ENCODE measurements at regions of chr3 and their contacts with region 1.

Region 1: GRCh38 chr3:12224181-12225147 is 64.4 kb upstream of the PPARG start:
- DNase-seq: peak; percentile 61
- H3K4me3 Mint-ChIP-seq: no peak overlapping the region
- H3K27ac Mint-ChIP-seq: peak overlapping the region; percentile 47
- H3K4me1 Mint-ChIP-seq: peaks cover 60% of the 10 kb centered on the region
- H3K27me3 Mint-ChIP-seq: no peaks in the 10 kb centered on the region
- CTCF ChIP-seq: no peak

Region 2: DNA sequence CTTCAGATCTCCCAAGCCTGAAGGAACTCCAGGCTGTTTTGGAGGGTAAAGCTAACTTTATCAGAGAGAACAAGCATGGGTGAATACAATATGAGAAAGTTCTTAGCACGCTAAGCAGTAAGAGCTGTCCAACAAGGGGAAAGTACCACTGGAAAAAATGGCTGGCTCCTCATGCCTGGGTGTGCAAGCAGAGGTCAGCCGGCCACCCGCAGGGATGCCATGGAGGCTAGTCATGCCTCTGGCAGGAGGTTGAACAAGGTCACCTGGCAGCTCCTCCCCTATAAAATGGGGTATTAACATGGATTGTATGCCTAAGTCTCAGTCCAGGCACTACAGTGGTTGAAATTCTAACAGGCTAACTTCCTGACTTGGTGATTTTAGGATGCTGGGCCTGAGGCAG is 1307.3 kb before region 1 on chr3:
- CTCF ChIA-PET with region 1: no interaction called
- intact Hi-C with region 1: no loop called
- DNase-seq: no peak
- H3K4me3 Mint-ChIP-seq: no peak overlapping the region
- H3K27ac Mint-ChIP-seq: no peak overlapping the region
- H3K4me1 Mint-ChIP-seq: no peaks in the 10 kb centered on the region
- H3K27me3 Mint-ChIP-seq: peaks cover 94% of the 10 kb centered on the region
- CTCF ChIP-seq: no peak

Region 3: GRCh38 chr3:12270976-12271375 is 46.5 kb after region 1 on chr3:
- CTCF ChIA-PET with region 1: no interaction called
- intact Hi-C with region 1: loop called (anchors 2 kb)
- DNase-seq: peak; percentile 56
- H3K4me3 Mint-ChIP-seq: no peak overlapping the region
- H3K27ac Mint-ChIP-seq: no peak overlapping the region
- H3K4me1 Mint-ChIP-seq: peaks cover 12% of the 10 kb centered on the region
- H3K27me3 Mint-ChIP-seq: no peaks in the 10 kb centered on the region
- CTCF ChIP-seq: no peak

Region 4: GRCh38 chr3:12287727-12288191 is 63.3 kb after region 1 on chr3:
- CTCF ChIA-PET with region 1: no interaction called
- intact Hi-C with region 1: loop called (anchors 5 kb)
- DNase-seq: peak; percentile 63
- H3K4me3 Mint-ChIP-seq: peak overlapping the region; percentile 81
- H3K27ac Mint-ChIP-seq: peak overlapping the region; percentile 84
- H3K4me1 Mint-ChIP-seq: peaks cover 16% of the 10 kb centered on the region
- H3K27me3 Mint-ChIP-seq: no peaks in the 10 kb centered on the region
- CTCF ChIP-seq: no peak